Activated B cell treated with CpG ODN at 0.5 μM for 24 hours (primary cell): ENCODE measurements at regions of chr19 and their contacts with region 1.

Region 1: DNA sequence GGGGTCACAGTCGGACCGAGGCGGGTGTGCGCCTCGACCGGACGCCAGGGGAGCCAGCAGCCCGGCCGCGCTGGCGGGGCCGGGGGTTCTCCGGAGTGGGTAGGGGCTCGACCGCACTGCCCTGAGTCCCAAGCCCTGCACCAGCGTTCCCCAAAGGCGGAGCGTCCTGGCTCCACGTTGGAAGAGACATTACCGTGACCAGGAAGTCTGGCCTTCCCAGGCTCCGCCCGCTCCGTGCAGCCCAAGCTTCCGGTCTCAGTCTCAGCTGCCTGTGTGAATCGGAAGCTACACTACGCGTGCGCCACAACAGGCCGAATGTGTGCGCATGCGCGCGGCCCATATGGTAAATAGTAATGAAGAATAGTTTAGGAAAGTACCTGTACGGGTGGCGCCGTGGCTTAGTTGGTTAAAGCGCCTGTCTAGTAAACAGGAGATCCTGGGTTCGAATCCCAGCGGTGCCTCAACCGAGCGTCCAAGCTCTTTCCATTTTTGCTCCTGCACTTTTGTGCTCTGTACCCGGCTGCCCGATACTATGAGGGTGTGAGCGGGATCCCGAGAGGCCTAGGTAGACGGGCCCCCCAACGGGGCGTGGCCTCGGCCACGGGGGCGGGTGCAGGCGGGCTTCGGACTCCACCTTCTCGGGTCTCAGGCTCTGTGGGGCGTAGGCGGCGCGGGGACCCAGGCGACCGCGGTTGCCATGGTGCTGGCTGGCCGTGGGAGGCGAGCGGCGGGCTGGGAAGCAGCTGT is 17.3 kb upstream of the LRP3 start:
- DNase-seq: peak; percentile 97
- ATAC-seq: peak; percentile 86
- H3K4me3 Mint-ChIP-seq: peak overlapping the region; percentile 93
- H3K27ac Mint-ChIP-seq: peak overlapping the region; percentile 98
- H3K4me1 Mint-ChIP-seq: peaks cover 34% of the 10 kb centered on the region
- H3K27me3 Mint-ChIP-seq: peaks cover 2% of the 10 kb centered on the region
- CTCF ChIP-seq: no peak

Region 2: GRCh38 chr19:32580901-32581703 is 595.7 kb before region 1 on chr19 and contains the start of gene PDCD5:
- CTCF ChIA-PET with region 1: no interaction called
- POLR2A ChIA-PET with region 1: interaction called, 3 read pairs
- intact Hi-C with region 1: loop called (anchors 10 kb)
- DNase-seq: peak; percentile 91
- ATAC-seq: peak; percentile 95
- H3K4me3 Mint-ChIP-seq: peak within 1 kb of the TSS; percentile 91
- H3K27ac Mint-ChIP-seq: peak within 1 kb of the TSS; percentile 85
- H3K4me1 Mint-ChIP-seq: peaks cover 16% of the 10 kb centered on the region
- H3K27me3 Mint-ChIP-seq: no peaks in the 10 kb centered on the region
- CTCF ChIP-seq: no peak
- total RNA-seq, gene PDCD5: 58.2 and 64.9 TPM in 2 replicates

Region 3: GRCh38 chr19:33064792-33065550 is 111.9 kb before region 1 on chr19 and contains the start of gene RHPN2:
- CTCF ChIA-PET with region 1: interaction called, 3 read pairs
- POLR2A ChIA-PET with region 1: interaction called, 4 read pairs
- intact Hi-C with region 1: loop called (anchors 1 kb)
- DNase-seq: peak; percentile 53
- ATAC-seq: peak; percentile 89
- H3K4me3 Mint-ChIP-seq: peak within 1 kb of the TSS; percentile 76
- H3K27ac Mint-ChIP-seq: no peak within 1 kb of the TSS
- H3K4me1 Mint-ChIP-seq: peaks cover 9% of the 10 kb centered on the region
- H3K27me3 Mint-ChIP-seq: peaks cover 5% of the 10 kb centered on the region
- CTCF ChIP-seq: no peak
- total RNA-seq, gene RHPN2: 1.0 and 1.7 TPM in 2 replicates

Region 4: GRCh38 chr19:33161201-33161600 is 15.6 kb before region 1 on chr19:
- CTCF ChIA-PET with region 1: no interaction called
- POLR2A ChIA-PET with region 1: interaction called, 18 read pairs
- intact Hi-C with region 1: no loop called
- DNase-seq: no peak
- ATAC-seq: no peak
- H3K4me3 Mint-ChIP-seq: no peak overlapping the region
- H3K27ac Mint-ChIP-seq: no peak overlapping the region
- H3K4me1 Mint-ChIP-seq: peaks cover 7% of the 10 kb centered on the region
- H3K27me3 Mint-ChIP-seq: no peaks in the 10 kb centered on the region
- CTCF ChIP-seq: no peak

Region 5: GRCh38 chr19:33373701-33374421 is 197.0 kb after region 1 on chr19 and contains the start of gene CEBPG:
- CTCF ChIA-PET with region 1: no interaction called
- POLR2A ChIA-PET with region 1: interaction called, 43 read pairs
- intact Hi-C with region 1: loop called (anchors 1 kb)
- DNase-seq: no peak
- ATAC-seq: peak; percentile 34
- H3K4me3 Mint-ChIP-seq: peak within 1 kb of the TSS; percentile 86
- H3K27ac Mint-ChIP-seq: peak within 1 kb of the TSS; percentile 93
- H3K4me1 Mint-ChIP-seq: peaks cover 52% of the 10 kb centered on the region
- H3K27me3 Mint-ChIP-seq: no peaks in the 10 kb centered on the region
- CTCF ChIP-seq: no peak
- total RNA-seq, gene CEBPG: 30.6 and 32.0 TPM in 2 replicates

Region 6: GRCh38 chr19:34134190-34135053 is 957.6 kb after region 1 on chr19:
- CTCF ChIA-PET with region 1: no interaction called
- POLR2A ChIA-PET with region 1: interaction called, 5 read pairs
- intact Hi-C with region 1: loop called (anchors 5 kb)
- DNase-seq: peak; percentile 96
- ATAC-seq: peak; percentile 99
- H3K4me3 Mint-ChIP-seq: peak overlapping the region; percentile 93
- H3K27ac Mint-ChIP-seq: peak overlapping the region; percentile 91
- H3K4me1 Mint-ChIP-seq: peaks cover 5% of the 10 kb centered on the region
- H3K27me3 Mint-ChIP-seq: no peaks in the 10 kb centered on the region
- CTCF ChIP-seq: no peak

Region 7: DNA sequence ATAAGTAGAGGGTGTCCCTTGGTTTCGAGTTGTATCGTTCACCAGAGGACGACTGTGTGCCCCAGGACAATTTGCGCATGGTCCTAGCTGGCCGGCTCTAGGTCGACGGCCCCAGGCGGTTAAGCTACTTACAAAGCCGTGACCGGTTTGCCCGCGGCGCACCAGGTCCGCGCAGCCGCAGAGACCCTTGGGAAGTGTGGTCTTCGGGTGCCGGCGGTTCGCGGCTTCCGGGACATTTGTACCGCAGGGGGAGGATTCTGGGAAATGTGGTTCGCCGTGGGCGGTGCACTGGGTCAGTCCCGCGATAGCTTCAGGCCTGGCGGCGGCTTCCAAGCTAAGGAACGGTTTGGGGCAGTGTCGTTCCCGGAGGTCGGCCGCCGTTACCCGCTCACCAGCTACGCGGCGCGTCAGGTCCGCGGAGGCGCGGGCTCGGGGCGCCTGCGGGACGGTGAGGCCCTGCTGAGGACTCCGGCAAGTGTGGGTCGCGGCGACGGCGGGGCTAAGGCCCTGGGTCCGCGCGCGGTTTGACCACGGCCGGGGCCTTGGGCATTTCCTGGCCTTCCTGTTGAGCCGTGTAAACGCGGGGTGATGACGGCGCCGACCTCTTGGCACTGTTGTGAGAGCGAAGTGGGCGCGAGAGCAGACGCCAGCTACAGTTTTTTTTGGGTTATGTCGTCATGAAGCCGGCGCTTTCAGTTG is 1500.7 kb after region 1 on chr19 and contains the start of gene ZNF302:
- CTCF ChIA-PET with region 1: no interaction called
- POLR2A ChIA-PET with region 1: interaction called, 3 read pairs
- intact Hi-C with region 1: loop called (anchors 2 kb)
- DNase-seq: peak; percentile 94
- ATAC-seq: peak; percentile 90
- H3K4me3 Mint-ChIP-seq: peak within 1 kb of the TSS; percentile 98
- H3K27ac Mint-ChIP-seq: peak within 1 kb of the TSS; percentile 99
- H3K4me1 Mint-ChIP-seq: peaks cover 33% of the 10 kb centered on the region
- H3K27me3 Mint-ChIP-seq: peaks cover 6% of the 10 kb centered on the region
- CTCF ChIP-seq: no peak
- total RNA-seq, gene ZNF302: 33.7 and 38.1 TPM in 2 replicates